Adrenal gland (tissue), 19 donors: ENCODE measurements at regions of chr15 and their contacts with region 1.

Region 1: DNA sequence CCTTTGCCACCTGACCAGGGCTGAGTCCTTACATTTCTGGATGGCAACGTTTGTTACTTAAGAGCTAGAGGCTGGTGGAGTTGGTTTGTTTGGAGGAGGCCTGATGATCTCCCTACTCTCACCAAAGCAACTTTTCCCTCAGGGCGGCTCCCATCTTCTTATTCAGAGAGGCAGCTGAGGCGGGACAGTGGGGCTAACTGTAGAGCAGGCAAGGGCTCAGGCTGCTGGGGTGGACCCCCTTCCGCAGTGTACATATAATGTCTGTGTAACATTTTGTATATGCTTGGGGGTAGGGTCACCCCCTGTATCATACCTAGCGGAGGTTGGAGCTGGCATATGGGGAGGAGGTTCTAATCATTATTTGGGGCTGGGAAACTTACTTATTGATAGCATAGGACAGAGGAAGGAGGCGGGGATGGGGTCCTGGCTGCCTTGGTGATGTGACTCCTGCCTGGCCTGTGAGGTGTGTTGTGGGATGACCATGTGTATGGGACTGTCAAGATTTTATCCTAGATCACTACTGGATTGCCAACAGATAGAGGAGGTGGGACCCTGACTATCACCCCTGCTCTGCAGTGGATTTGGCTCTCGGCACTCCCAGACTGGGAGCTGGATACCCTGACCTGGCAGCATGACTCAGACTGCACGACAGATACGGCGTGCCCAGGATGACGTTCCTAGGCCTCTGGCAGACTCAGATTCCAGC is 52.5 kb upstream of the UBE2Q2 start:
- DNase-seq: peak in 1 of 7 donors; percentile 36
- H3K4me3 ChIP-seq: no peak overlapping the region
- H3K27ac ChIP-seq: no peak overlapping the region
- H3K4me1 ChIP-seq: no peaks in the 10 kb centered on the region
- H3K27me3 ChIP-seq: peaks cover 9% of the 10 kb centered on the region
- CTCF ChIP-seq: no peak
- POLR2A ChIP-seq: no peak

Region 2: GRCh38 chr15:75694241-75695182 is 96.3 kb before region 1 on chr15:
- intact Hi-C with region 1: loop called in 1 of 2 experiments (anchors 10 kb)
- DNase-seq: peak; percentile 86 to 95 (median 94)
- H3K4me3 ChIP-seq: no peak overlapping the region
- H3K27ac ChIP-seq: peak overlapping the region in 3 of 5 donors; percentile 34 to 79 (median 63)
- H3K4me1 ChIP-seq: peaks cover 13 to 23% of the 10 kb centered on the region in 2 donors
- H3K27me3 ChIP-seq: no peaks in the 10 kb centered on the region
- CTCF ChIP-seq: peak in 5 of 6 experiments; percentile 33 to 52 (median 40)
- POLR2A ChIP-seq: peak in 1 of 2 donors; percentile 18

Region 3: GRCh38 chr15:75966073-75966472 is 175.3 kb after region 1 on chr15:
- intact Hi-C with region 1: no loop called
- DNase-seq: no peak
- H3K4me3 ChIP-seq: no peak overlapping the region
- H3K27ac ChIP-seq: no peak overlapping the region
- H3K4me1 ChIP-seq: no peaks in the 10 kb centered on the region
- H3K27me3 ChIP-seq: no peaks in the 10 kb centered on the region
- CTCF ChIP-seq: no peak
- POLR2A ChIP-seq: no peak